GM10248 (cell line): ENCODE measurements at regions of chr5 and their contacts with region 1.

Region 1: DNA sequence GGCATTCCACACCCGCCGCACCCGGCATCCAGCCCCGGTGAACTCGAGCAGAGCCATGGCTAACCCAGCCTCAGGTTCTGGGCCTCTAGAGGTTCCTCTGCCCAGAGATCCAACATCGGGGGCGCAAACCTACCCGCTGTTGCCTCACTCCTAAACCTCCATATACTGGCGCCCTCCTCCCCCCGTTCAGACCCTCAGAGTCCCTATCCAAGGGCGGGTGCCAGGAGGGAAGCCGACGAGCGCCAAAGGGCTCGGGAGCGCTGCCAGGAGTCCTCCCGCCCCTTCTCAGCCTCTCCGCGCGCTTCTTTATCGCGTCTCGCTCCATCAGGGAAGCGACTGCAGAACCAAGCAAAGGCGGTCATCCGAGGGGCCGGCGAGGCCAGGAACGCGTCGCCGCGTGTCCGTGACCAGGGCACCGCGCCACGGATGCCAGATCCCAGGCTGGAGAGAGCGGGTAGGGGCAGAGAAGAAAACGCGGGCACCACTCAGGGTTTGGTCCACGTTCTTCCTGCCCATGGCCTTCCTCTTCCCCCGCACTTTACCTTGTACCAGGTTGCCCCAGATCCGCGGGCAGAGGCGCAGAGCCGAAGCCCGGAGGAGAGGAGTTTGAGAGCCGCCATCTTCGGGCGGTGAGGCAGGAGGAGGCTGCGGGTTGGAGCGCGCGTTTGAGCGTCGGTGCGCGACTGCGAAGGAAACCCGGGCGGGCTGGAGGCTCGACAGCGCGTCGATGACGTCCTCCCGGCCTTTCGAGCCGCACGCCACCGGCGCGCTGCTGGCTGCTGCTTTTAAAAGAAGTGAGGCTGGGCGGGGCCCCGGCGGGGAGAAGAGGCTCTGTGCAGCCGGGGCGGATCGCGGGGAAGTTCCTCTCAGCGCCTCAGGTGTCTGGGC is at the start of gene OXCT1:
- DNase-seq: peak; percentile 93
- CTCF ChIP-seq: no peak

Region 2: DNA sequence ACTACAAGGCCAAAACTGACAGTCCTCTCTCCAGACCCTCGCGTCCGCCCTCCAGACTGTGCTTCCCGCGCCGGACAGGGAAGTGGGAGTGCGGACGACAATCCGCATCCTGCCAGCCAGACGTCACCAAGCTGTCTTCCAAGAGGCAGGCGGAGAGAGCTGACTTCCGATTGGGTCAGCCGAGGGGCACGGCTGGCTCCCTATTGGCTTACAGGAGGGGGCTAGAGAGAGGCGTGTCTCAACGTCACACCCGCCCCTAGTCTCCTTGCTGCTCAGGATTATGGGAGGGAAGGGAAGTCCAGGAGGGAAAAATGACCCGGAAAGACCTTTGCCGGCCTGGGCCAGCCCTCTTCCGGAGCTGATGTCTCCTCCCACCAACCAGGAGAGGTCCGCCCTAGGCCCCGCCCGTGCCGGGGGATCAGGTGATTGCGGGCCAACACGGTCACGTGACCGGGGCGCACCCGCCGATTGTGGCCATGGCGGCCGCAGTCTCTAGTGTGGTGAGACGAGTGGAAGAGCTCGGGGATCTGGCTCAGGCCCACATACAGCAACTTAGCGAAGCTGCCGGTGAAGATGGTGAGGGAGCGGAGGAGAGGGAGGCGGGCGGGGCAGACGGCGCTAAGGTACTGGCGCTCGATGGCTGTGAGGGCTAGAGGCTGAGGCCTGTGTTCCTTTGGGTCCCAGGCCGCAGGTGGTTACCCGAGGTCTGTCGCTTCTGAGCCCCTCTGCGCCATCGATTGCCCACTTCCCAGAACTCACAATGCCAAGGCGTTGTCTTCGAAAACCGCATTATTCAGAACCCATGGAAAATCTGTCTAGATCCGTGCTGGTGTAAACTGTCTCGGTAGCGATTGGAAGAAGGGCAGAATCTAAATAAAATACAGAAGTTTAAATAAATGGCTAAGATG is 34.2 kb after region 1 on chr5 and contains the start of gene RIMOC1:
- CTCF ChIA-PET with region 1: interaction called, 4 read pairs
- POLR2A ChIA-PET with region 1: interaction called, 10 read pairs
- DNase-seq: peak; percentile 93
- CTCF ChIP-seq: no peak